ENCODE measurements at regions of chrX and their contacts with region 1.

Region 1: GRCh38 chrX:15335135-15336022 is at the start of gene PIGA:
- DNase-seq: peak; percentile 81 to 97 (median 88)
- ATAC-seq: peak; percentile 90
- H3K4me3 ChIP-seq: peak within 1 kb of the TSS; percentile 96
- H3K4me3 Mint-ChIP-seq: peak within 1 kb of the TSS; percentile 98
- H3K27ac ChIP-seq: peak within 1 kb of the TSS; percentile 77 to 89
- H3K27ac Mint-ChIP-seq: peak within 1 kb of the TSS; percentile 98
- H3K4me1 ChIP-seq: peaks cover 13% of the 10 kb centered on the region
- H3K4me1 Mint-ChIP-seq: peaks cover 26% of the 10 kb centered on the region
- H3K27me3 ChIP-seq: peaks cover 0 to 8% of the 10 kb centered on the region in 2 experiments
- H3K27me3 Mint-ChIP-seq: peaks cover 13% of the 10 kb centered on the region
- CTCF ChIP-seq: no peak
- total RNA-seq, gene PIGA: 130 to 134 TPM

Region 2: GRCh38 chrX:13734278-13735172 is 1600.9 kb before region 1 on chrX and contains the starts of genes OFD1 and TRAPPC2:
- CTCF ChIA-PET with region 1: no interaction called
- POLR2A ChIA-PET with region 1: interaction called, 3 read pairs
- intact Hi-C with region 1: loop called in 1 of 2 experiments (anchors 10 kb)
- DNase-seq: peak; percentile 81 to 95 (median 87)
- ATAC-seq: peak; percentile 86
- H3K4me3 ChIP-seq: peak within 1 kb of the TSS; percentile 92
- H3K4me3 Mint-ChIP-seq: peak within 1 kb of the TSS; percentile 99
- H3K27ac ChIP-seq: peak within 1 kb of the TSS; percentile 96 to 99
- H3K27ac Mint-ChIP-seq: peak within 1 kb of the TSS; percentile 100
- H3K4me1 ChIP-seq: peaks cover 19% of the 10 kb centered on the region
- H3K4me1 Mint-ChIP-seq: peaks cover 56% of the 10 kb centered on the region
- H3K27me3 ChIP-seq: no peaks in the 10 kb centered on the region
- H3K27me3 Mint-ChIP-seq: no peaks in the 10 kb centered on the region
- CTCF ChIP-seq: no peak
- total RNA-seq, gene OFD1: 59.1 to 60.0 TPM
- total RNA-seq, gene TRAPPC2: 21.4 to 22.3 TPM

Region 3: DNA sequence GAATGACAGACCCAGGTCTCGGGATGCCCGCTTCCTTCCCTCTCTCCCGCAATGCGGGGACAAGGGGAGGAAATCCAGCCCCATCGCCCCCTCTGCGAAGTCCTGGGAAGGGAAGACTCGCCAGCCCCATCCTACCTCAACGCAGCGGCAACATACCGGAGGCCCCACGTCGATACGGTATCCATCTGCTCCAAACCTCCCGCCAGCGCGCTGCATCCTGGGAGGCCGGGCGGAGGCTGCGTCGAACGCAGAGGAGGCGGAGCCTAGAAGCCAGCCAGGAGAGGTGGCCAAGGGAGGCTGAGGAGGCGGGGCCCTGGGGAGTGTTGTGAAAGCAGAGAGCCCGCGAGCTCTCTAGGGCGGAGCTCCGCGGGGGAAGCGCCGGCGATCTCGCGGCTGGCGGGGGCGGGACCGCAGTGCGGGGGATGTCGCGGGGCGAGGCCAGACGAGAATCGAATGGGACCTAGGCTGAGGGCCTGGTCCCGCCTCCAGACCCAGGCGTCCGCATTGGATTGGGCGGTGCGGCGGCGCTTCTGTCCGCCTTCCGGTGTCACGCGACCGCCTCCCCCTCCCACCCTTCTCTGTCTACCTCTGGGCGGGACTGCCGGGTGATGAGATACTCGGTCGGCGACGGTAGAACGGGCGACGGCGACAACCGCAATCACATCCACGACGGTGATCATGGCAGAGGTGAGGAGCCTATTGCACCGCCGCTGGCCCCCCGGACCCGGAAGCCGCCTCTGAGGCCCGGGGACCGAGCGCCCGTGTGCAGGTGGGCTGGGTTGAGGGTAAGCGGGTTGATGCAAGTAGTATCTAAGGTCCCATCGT is 462.3 kb before region 1 on chrX and contains the starts of genes FANCB and MOSPD2:
- CTCF ChIA-PET with region 1: no interaction called
- POLR2A ChIA-PET with region 1: no interaction called
- intact Hi-C with region 1: loop called in 1 of 2 experiments (anchors 5 kb)
- DNase-seq: peak; percentile 82 to 97 (median 92)
- ATAC-seq: peak; percentile 89
- H3K4me3 ChIP-seq: peak within 1 kb of the TSS; percentile 85
- H3K4me3 Mint-ChIP-seq: peak within 1 kb of the TSS; percentile 93
- H3K27ac ChIP-seq: peak within 1 kb of the TSS; percentile 71 to 72
- H3K27ac Mint-ChIP-seq: peak within 1 kb of the TSS; percentile 91
- H3K4me1 ChIP-seq: peaks cover 7% of the 10 kb centered on the region
- H3K4me1 Mint-ChIP-seq: peaks cover 8% of the 10 kb centered on the region
- H3K27me3 ChIP-seq: no peaks in the 10 kb centered on the region
- H3K27me3 Mint-ChIP-seq: no peaks in the 10 kb centered on the region
- CTCF ChIP-seq: no peak
- total RNA-seq, gene FANCB: 1.5 to 1.6 TPM
- total RNA-seq, gene MOSPD2: 6.4 to 6.8 TPM

Region 4: GRCh38 chrX:14963447-14964236 is 371.7 kb before region 1 on chrX:
- CTCF ChIA-PET with region 1: no interaction called
- POLR2A ChIA-PET with region 1: no interaction called
- intact Hi-C with region 1: no loop called
- DNase-seq: no peak
- ATAC-seq: no peak
- H3K4me3 ChIP-seq: no peak overlapping the region
- H3K4me3 Mint-ChIP-seq: no peak overlapping the region
- H3K27ac ChIP-seq: no peak overlapping the region
- H3K27ac Mint-ChIP-seq: no peak overlapping the region
- H3K4me1 ChIP-seq: no peaks in the 10 kb centered on the region
- H3K4me1 Mint-ChIP-seq: no peaks in the 10 kb centered on the region
- H3K27me3 ChIP-seq: no peaks in the 10 kb centered on the region
- H3K27me3 Mint-ChIP-seq: no peaks in the 10 kb centered on the region
- CTCF ChIP-seq: no peak

Region 5: DNA sequence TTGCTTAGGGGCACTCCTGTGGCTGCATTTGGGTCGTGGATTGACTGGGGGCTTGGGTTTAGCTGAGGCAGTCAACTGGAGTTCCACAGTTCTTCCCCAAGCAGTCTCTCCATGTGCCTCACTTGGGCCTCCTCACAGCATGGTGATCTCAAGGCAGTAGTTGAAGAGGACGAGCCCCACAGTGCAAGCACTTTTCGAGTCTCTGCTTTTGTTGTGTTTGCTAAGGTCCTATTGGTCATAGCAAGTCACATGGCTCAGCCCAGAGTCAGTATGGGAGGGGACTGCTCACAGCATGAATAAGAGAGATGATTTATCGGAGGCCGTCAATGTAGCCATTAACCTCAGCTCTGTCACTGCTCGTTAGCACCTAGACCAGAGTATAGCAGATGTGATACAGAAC is 194.9 kb after region 1 on chrX:
- CTCF ChIA-PET with region 1: no interaction called
- POLR2A ChIA-PET with region 1: no interaction called
- intact Hi-C with region 1: no loop called
- DNase-seq: no peak
- ATAC-seq: no peak
- H3K4me3 ChIP-seq: no peak overlapping the region
- H3K4me3 Mint-ChIP-seq: no peak overlapping the region
- H3K27ac ChIP-seq: no peak overlapping the region
- H3K27ac Mint-ChIP-seq: no peak overlapping the region
- H3K4me1 ChIP-seq: no peaks in the 10 kb centered on the region
- H3K4me1 Mint-ChIP-seq: no peaks in the 10 kb centered on the region
- H3K27me3 ChIP-seq: no peaks in the 10 kb centered on the region
- H3K27me3 Mint-ChIP-seq: peaks cover 14% of the 10 kb centered on the region
- CTCF ChIP-seq: no peak

Region 6: DNA sequence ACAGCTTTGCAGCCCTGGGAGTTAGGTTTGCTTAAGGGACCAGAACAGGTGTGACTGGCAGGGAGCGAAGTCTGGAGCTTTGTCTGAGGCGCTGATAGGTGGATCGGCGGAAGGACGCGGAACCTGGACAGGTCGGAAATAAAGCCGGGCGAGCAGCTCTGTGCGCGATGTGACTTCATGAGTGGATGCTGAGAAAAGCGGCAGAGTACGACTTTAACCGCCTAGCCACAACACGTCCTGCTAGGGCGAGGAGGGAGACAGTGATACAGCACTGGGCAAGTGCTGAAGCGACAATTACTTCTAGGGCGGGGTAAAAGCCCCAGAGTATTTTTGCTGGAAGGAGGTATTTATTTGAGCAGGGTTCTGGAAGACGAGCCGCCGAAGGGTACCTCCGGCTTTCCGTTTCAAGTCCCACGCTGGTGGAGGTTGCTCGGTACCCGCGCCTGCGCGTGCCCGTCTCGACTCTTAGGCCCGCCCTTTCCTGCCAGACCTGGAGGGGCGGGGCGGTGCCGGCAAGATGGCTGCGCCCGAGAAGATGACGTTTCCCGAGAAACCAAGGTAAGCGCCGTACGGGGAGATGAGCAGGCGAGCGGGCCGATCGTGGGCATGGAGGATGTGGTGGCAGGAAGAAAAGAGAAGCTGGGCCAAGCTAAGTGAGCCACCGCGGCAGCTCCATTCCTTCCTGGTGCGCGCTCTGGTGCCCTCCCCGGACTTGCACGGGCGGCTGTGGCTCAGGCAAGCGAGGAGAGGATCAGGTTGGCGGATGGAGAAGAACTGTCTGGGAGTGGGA is 454.8 kb after region 1 on chrX and contains the start of gene ZRSR2:
- CTCF ChIA-PET with region 1: no interaction called
- POLR2A ChIA-PET with region 1: no interaction called
- intact Hi-C with region 1: loop called in 1 of 2 experiments (anchors 10 kb)
- DNase-seq: peak; percentile 72 to 94 (median 86)
- ATAC-seq: peak; percentile 90
- H3K4me3 ChIP-seq: peak within 1 kb of the TSS; percentile 86
- H3K4me3 Mint-ChIP-seq: no peak within 1 kb of the TSS
- H3K27ac ChIP-seq: peak within 1 kb of the TSS; percentile 87 to 92
- H3K27ac Mint-ChIP-seq: no peak within 1 kb of the TSS
- H3K4me1 ChIP-seq: peaks cover 27% of the 10 kb centered on the region
- H3K4me1 Mint-ChIP-seq: peaks cover 13% of the 10 kb centered on the region
- H3K27me3 ChIP-seq: no peaks in the 10 kb centered on the region
- H3K27me3 Mint-ChIP-seq: no peaks in the 10 kb centered on the region
- CTCF ChIP-seq: no peak
- total RNA-seq, gene ZRSR2: 18.4 to 21.1 TPM

Region 7: GRCh38 chrX:16719334-16720084 is 1384.1 kb after region 1 on chrX and contains the start of gene SYAP1:
- CTCF ChIA-PET with region 1: no interaction called
- POLR2A ChIA-PET with region 1: no interaction called
- intact Hi-C with region 1: loop called in 1 of 2 experiments (anchors 2 kb)
- DNase-seq: peak; percentile 81 to 98 (median 92)
- ATAC-seq: peak; percentile 86
- H3K4me3 ChIP-seq: peak within 1 kb of the TSS; percentile 69
- H3K4me3 Mint-ChIP-seq: peak within 1 kb of the TSS; percentile 97
- H3K27ac ChIP-seq: peak within 1 kb of the TSS; percentile 89 to 96
- H3K27ac Mint-ChIP-seq: peak within 1 kb of the TSS; percentile 100
- H3K4me1 ChIP-seq: peaks cover 20% of the 10 kb centered on the region
- H3K4me1 Mint-ChIP-seq: peaks cover 44% of the 10 kb centered on the region
- H3K27me3 ChIP-seq: no peaks in the 10 kb centered on the region
- H3K27me3 Mint-ChIP-seq: no peaks in the 10 kb centered on the region
- CTCF ChIP-seq: no peak
- total RNA-seq, gene SYAP1: 60.2 to 65.2 TPM

Measured in CD4-positive, alpha-beta T cell (primary cell).